Right ventricle myocardium superior (tissue), 1 donor: ENCODE measurements at regions of chr6 and their contacts with region 1.

Region 1: DNA sequence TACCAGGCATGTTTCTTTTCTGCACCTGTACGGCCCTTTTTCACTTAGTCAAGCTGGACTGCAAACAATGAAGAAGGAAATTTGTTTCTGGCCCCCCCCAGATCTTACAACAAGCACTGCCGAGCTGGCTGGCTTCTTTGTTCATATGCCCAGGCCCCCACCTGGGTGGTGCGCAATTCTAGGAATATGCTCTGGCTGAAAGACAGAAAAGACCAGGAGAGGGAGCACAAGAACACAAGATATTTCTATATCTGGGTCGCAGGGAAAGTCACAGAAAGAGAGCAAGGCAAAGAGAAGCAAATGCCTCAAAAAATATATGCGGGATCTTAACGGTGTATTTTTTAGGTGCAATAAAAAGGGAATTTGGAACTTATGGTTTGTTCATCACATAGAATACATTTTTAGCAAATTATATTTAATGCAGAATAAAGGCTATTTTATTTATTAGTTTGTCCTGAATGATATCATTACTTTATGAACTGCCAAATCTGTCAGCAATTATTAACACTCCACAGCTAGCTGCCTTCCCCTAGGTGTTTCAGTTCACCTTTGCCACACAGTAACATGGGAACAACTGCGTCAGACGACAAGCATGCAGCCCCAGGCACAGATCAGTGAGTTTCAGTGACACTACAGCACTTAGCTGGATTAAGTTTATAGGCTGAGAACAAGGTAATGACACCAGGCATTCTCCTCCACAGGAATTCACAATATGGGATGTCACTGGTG is 76.5 kb downstream of the GJA10 start:
- DNase-seq: peak; percentile 50
- ATAC-seq: peak; percentile 72

Region 2: DNA sequence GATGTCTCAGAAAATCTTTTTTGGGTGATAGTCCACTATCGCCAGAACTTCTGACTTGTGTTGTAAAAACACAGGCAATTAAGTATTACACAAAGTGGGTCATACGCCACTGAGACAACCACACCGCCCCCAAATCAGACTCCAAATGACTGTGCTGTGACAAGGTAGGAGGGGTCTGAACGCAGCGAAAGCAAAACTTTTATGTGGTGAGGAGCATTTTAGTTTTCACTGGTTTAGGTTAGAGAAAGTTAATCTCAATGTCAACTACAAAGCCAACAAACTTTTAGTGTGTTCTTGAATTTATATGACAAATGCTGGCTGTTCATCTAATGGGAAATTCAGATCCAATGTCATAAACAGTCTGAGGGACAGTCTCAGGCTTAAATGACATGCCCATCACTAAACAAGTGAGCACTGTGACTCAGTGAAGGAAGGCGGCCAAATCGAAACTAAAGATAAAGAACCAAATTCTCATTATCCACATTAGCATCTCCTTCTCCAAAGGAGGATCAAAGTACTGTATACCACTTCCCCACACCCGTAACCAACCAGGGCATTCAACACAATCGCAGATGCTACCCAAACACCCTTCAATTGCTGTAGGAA is 110.2 kb after region 1 on chr6:
- intact Hi-C with region 1: no loop called
- DNase-seq: no peak
- ATAC-seq: no peak

Region 3: GRCh38 chr6:90204327-90205056 is 233.7 kb after region 1 on chr6:
- intact Hi-C with region 1: no loop called
- DNase-seq: no peak
- ATAC-seq: peak; percentile 58

Region 4: GRCh38 chr6:90296346-90297114 is 325.8 kb after region 1 on chr6 and contains the start of gene BACH2:
- intact Hi-C with region 1: loop called (anchors 5 kb)
- DNase-seq: peak; percentile 95
- ATAC-seq: peak; percentile 74
- total RNA-seq, gene BACH2: 1.9 TPM

Region 5: DNA sequence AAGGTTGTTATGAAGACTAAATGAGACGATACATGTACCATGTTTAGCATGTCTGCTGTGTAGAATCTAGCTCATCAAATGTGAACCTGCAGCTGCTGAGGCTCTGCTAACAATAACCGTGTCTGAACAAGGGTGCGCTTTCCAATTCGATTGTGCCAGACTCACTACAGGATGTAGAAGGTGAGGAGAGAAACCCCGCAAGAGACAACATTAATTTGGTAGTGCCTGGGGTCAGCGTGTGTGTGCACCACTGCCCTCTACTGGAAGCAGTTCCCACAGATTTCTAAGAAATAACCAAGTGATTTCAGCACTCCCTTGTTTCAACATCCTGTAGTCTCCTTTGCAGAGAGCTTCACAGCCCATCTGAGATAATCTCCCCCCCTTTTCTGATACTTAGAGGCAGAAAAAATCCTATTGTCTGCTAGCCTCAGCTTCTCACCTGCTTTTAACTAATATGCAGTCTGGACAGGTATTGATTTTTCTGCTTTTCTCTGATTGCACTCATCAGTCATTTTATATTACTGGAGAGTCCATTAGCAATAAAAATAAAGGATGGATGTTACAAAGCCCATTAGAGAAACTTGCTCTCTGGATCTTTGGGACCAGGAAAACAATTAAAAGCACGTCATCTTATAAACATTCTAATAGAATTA is 422.6 kb after region 1 on chr6:
- intact Hi-C with region 1: loop called (anchors 5 kb)
- DNase-seq: no peak
- ATAC-seq: peak; percentile 77

Region 6: DNA sequence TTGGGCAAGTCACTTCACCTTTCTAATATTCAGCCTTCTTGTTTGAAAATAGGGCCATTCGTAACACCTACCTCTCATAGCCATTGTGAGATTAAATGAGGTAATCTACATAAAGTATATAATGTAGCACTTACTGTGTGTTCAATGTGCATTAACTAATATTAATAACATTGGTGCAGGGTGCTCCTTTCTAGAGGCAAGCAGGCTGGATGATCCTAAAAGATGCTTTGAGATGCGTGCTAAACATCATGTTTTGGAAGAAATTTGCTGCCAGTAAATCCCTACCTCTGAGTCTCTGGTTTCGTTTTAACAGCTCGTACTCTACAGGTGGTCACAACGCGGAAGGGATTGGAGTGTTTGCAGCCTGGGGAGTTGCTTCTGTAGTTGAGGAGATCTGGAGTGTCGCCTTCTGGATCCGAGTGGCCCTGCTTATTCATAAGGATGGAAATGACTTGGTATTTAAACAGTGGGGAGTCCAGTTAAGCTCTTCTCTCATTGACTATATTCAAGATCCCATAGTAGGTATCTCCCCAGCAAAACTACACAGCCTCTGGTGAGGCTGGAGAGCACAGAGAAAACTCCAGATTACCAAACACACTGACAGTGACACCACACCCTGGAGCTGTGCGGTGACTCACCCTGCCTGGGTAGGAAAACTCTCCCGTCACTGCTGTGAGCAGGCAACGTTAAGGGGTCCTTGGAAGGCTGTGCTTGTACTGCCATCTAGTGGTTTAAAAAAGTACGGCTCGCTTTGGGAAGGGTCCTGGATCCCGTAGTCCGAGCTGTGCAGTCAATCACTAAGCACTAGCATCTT is 508.2 kb after region 1 on chr6:
- intact Hi-C with region 1: loop called (anchors 10 kb)
- DNase-seq: peak; percentile 85
- ATAC-seq: peak; percentile 99